Activated T-helper 2 cell treated with anti-CD3 and anti-CD28 coated beads, Interferon-gamma antibody, Interleukin-2, Interleukin-4, amounts not matched to agents 10 μg/mL and 5 μg/mL and 100 μg/mL, durations not matched to agents 14 hours and 24 hours and 36 hours (primary cell): ENCODE measurements at regions of chr11 and their contacts with region 1.

Region 1: DNA sequence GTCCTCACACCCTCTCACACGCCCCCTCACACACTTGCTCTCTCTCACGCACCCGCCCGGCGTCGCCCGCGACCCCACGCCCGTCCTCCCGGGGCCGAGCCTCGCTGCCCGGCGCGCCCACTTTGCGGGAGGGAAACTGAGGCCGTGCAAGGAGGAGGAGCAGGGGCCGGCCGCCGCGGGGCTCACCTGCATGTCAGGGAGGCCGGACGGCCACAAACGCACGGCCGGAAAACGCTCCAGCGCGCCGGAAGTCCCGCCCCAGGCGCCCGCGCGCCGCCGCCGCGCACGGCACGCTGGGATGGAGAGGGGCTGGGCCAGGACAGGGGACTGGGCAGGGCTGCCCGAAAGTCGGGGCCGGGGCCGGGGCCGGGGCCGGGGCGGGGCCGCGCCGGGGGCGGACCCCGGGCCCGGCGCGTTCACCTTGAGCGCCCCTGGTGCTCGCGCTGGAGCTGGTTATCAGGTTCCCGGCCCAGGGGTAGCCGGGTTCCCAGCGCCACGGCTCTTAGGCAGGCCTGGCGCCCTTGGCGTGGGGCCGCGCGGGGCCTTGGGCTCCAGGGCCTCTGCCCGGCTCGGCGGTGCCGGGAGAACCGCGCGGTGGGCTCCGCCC is at the start of gene CHID1:
- DNase-seq: peak; percentile 84
- H3K4me3 Mint-ChIP-seq: peak within 1 kb of the TSS; percentile 94
- H3K27ac Mint-ChIP-seq: peak within 1 kb of the TSS; percentile 85
- H3K4me1 Mint-ChIP-seq: peaks cover 10% of the 10 kb centered on the region
- H3K27me3 Mint-ChIP-seq: no peaks in the 10 kb centered on the region
- total RNA-seq, gene CHID1: 89.0 and 96.0 TPM in 2 replicates

Region 2: GRCh38 chr11:587978-588380 is 322.7 kb before region 1 on chr11:
- intact Hi-C with region 1: no loop called
- DNase-seq: peak; percentile 60
- H3K4me3 Mint-ChIP-seq: peak overlapping the region; percentile 60
- H3K27ac Mint-ChIP-seq: peak overlapping the region; percentile 93
- H3K4me1 Mint-ChIP-seq: peaks cover 16% of the 10 kb centered on the region
- H3K27me3 Mint-ChIP-seq: no peaks in the 10 kb centered on the region

Region 3: GRCh38 chr11:842370-843002 is 68.2 kb before region 1 on chr11 and contains the starts of genes POLR2L and TSPAN4:
- intact Hi-C with region 1: loop called (anchors 5 kb)
- DNase-seq: peak; percentile 84
- H3K4me3 Mint-ChIP-seq: peak within 1 kb of the TSS; percentile 86
- H3K27ac Mint-ChIP-seq: peak within 1 kb of the TSS; percentile 81
- H3K4me1 Mint-ChIP-seq: peaks cover 11% of the 10 kb centered on the region
- H3K27me3 Mint-ChIP-seq: peaks cover 1% of the 10 kb centered on the region
- total RNA-seq, gene POLR2L: 101 and 111 TPM in 2 replicates
- total RNA-seq, gene TSPAN4: 15.8 and 16.9 TPM in 2 replicates

Region 4: DNA sequence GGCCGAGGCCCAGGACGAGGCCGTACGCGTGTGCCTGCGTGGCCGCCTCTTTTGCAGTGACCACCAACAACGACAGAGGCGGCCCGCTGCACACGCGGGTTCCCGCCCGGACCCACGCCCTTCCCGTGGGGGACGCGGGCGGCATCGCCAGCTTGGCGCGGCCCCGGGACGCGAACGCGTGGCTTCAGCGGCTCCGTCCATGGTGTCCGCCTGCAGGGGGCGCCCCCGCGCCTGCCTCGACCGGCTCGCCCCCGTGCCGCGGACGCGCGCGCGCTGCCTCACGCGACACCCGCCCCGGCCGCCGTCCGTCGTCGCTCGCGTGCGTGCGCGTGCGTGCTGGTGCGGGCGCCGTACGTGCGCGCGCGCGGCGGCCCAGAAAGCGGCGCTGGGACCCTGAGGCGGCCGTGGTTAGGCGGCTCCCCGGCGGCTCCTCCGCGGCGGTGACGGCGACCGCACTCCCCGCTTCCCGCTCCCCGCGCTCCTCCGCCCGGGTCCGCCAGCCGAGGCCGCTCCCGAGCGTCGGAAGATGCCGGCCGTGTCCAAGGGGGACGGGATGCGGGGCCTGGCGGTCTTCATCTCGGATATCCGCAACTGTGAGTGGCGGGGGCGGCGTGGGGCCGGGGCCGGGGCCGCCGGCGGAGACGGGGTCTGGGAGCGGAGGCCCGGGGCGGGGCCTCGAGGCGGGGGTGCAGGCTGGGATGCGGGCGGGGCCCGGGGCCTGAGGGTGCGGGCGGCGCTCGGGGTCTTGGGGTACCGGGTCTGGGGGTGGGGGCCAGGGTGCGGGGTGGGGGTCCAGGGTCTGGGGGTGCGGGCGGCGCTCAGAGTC is 15.0 kb after region 1 on chr11 and contains the start of gene AP2A2:
- intact Hi-C with region 1: loop called (anchors 2 kb)
- DNase-seq: peak; percentile 87
- H3K4me3 Mint-ChIP-seq: peak within 1 kb of the TSS; percentile 84
- H3K27ac Mint-ChIP-seq: peak within 1 kb of the TSS; percentile 50
- H3K4me1 Mint-ChIP-seq: peaks cover 22% of the 10 kb centered on the region
- H3K27me3 Mint-ChIP-seq: no peaks in the 10 kb centered on the region
- total RNA-seq, gene AP2A2: 61.3 and 63.2 TPM in 2 replicates